Dorsolateral prefrontal cortex (tissue), 120 donors: ENCODE measurements at regions of chr12 and their contacts with region 1.

Region 1: GRCh38 chr12:119673634-119674033 is 5.7 kb downstream of the PRKAB1 start:
- DNase-seq: no peak
- H3K4me3 ChIP-seq: no peak overlapping the region
- H3K27ac ChIP-seq: peak overlapping the region in 50 of 59 donors; percentile 2 to 94 (median 68)
- H3K27me3 ChIP-seq: no peaks in the 10 kb centered on the region
- CTCF ChIP-seq: no peak

Region 2: GRCh38 chr12:119446459-119446858 is 227.2 kb before region 1 on chr12:
- intact Hi-C with region 1: no loop called
- DNase-seq: no peak
- H3K4me3 ChIP-seq: no peak overlapping the region
- H3K27ac ChIP-seq: peak overlapping the region in 7 of 59 donors; percentile 4 to 53 (median 44)
- H3K27me3 ChIP-seq: peaks cover 0 to 42% (median 0%) of the 10 kb centered on the region in 45 donors
- CTCF ChIP-seq: no peak

Region 3: DNA sequence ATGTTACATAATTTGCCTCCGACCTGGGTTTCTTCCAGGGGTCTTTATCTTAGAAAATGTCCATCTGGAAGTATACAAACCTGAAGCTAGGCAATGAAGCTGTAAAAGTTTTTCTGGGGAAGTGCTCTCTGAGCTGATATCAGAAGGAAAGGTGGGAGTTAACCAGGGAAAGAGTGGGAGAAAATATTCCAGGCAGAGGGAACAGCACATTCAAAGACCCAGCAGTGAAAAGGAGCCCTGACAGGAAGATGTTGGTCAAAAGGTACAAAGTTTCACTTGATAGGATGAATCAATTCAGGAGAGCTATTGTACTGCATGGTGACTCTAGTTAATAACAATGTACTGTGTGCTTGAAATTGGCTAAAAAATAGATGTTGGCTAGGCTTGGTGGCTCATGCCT is 221.3 kb after region 1 on chr12:
- intact Hi-C with region 1: loop called in 1 of 2 experiments (anchors 10 kb)
- DNase-seq: no peak
- H3K4me3 ChIP-seq: no peak overlapping the region
- H3K27ac ChIP-seq: no peak overlapping the region
- H3K27me3 ChIP-seq: no peaks in the 10 kb centered on the region
- CTCF ChIP-seq: no peak